Naive thymus-derived CD4-positive, alpha-beta T cell (primary cell): ENCODE measurements at regions of chr22 and their contacts with region 1.

Region 1: GRCh38 chr22:39598017-39598965 is 27.7 kb downstream of the CACNA1I start:
- DNase-seq: peak; percentile 33 to 74 (median 69)
- ATAC-seq: peak; percentile 91
- H3K4me3 ChIP-seq: no peak overlapping the region
- H3K4me3 Mint-ChIP-seq: peak overlapping the region; percentile 27 to 84 (median 52)
- H3K27ac ChIP-seq: no peak overlapping the region
- H3K27ac Mint-ChIP-seq: peak overlapping the region in 2 of 9 donors; percentile 7 to 32
- H3K4me1 ChIP-seq: peaks cover 3 to 25% of the 10 kb centered on the region in 2 donors
- H3K4me1 Mint-ChIP-seq: peaks cover 21 to 51% (median 44%) of the 10 kb centered on the region in 7 donors
- H3K27me3 ChIP-seq: no peaks in the 10 kb centered on the region
- H3K27me3 Mint-ChIP-seq: peaks cover 0 to 32% (median 0%) of the 10 kb centered on the region in 5 donors

Region 2: DNA sequence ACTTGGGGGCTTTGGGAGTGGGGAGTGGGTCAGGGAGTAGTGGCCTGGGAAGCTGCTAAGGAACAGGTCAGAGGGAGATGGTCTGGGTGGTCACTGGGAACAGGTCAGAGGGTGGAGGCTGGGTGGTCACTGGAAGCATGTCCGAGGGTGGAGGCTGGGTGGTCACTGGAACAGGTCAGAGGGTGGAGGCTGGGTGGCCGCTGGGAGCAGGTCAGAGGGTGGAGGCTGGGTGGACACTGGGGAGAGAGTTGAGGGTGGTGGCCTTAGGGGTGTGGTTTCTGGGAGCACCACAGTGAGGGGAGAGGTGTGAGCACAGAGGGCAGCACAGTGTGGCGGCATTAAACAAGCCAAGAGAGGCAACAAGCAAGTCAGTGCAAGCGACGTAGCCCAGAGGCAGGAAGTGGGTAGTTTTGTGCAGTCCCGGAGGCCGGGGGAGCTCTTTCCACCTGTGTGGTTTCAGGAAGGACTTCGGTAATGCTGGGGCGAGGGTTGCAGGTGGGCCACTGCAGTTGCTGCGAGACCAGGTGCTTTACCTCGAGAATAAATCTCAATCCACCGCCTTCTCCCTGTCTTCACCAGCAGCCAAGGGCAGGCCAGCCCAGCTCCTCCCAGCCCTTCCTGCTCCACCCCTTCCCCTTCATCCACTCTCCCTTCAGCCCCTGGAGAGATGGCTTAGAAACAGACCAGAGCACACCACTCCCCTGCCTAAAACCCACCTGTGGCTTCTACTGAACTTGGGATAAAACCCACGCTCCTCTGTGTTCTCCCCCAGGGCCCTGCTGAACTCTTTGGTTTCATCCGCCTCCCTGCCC is 30.9 kb before region 1 on chr22:
- CTCF ChIA-PET with region 1: no interaction called
- POLR2A ChIA-PET with region 1: interaction called, 3 read pairs
- intact Hi-C with region 1: loop called in 1 of 2 experiments (anchors 5 kb)
- DNase-seq: peak in 8 of 9 donors; percentile 35 to 67 (median 61)
- ATAC-seq: peak; percentile 87
- H3K4me3 ChIP-seq: peak overlapping the region; percentile 41
- H3K4me3 Mint-ChIP-seq: peak overlapping the region; percentile 32 to 76 (median 62)
- H3K27ac ChIP-seq: no peak overlapping the region
- H3K27ac Mint-ChIP-seq: peak overlapping the region; percentile 67 to 95 (median 77)
- H3K4me1 ChIP-seq: peaks cover 10 to 17% of the 10 kb centered on the region in 2 donors
- H3K4me1 Mint-ChIP-seq: peaks cover 12 to 26% (median 23%) of the 10 kb centered on the region in 7 donors
- H3K27me3 ChIP-seq: no peaks in the 10 kb centered on the region
- H3K27me3 Mint-ChIP-seq: peaks cover 0 to 4% (median 0%) of the 10 kb centered on the region in 5 donors

Region 3: DNA sequence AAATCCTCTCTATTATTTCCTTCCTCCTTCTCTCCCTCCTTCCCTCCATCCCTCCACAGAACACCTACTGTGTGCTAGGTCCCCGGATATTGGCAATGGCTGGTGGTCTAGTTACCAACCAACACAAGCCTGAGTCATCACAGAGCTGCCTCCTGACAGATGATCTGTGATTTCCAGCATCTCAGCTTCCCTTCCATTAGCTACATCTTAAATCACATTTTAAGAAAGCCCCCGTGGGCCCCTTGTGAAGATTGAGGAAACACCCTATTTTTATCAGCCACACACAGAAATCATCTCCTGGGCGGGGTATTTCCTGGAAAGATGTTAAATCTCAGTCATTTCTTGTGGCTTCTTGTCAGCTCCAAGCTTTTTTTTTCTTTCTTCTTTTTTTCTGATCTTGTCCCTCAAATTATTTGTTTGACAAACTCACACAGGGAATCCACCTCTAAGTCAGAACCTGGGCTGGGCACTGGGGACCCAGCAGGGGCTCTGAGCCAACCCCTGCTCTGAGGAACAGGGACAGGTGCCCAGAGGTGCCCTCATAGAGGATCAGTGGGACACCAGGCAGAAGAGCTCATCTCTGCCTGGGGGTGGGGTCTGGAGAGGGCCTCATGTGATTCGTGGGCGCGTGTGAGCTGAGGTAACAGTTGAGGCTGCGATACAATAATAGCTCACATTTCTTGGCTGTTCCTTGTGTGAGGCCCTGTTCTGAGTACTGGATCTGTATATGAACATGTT is 14.7 kb after region 1 on chr22:
- CTCF ChIA-PET with region 1: no interaction called
- POLR2A ChIA-PET with region 1: interaction called, 13 read pairs
- intact Hi-C with region 1: no loop called
- DNase-seq: peak in 7 of 9 donors; percentile 24 to 74 (median 39)
- ATAC-seq: peak; percentile 71
- H3K4me3 ChIP-seq: no peak overlapping the region
- H3K4me3 Mint-ChIP-seq: peak overlapping the region; percentile 42 to 88 (median 73)
- H3K27ac ChIP-seq: peak overlapping the region; percentile 41
- H3K27ac Mint-ChIP-seq: peak overlapping the region; percentile 64 to 95 (median 78)
- H3K4me1 ChIP-seq: peaks cover 0 to 32% of the 10 kb centered on the region in 2 donors
- H3K4me1 Mint-ChIP-seq: peaks cover 16 to 69% (median 48%) of the 10 kb centered on the region in 7 donors
- H3K27me3 ChIP-seq: no peaks in the 10 kb centered on the region
- H3K27me3 Mint-ChIP-seq: peaks cover 0 to 38% (median under 1%) of the 10 kb centered on the region in 5 donors

Region 4: GRCh38 chr22:39738746-39739145 is 140.5 kb after region 1 on chr22:
- CTCF ChIA-PET with region 1: no interaction called
- POLR2A ChIA-PET with region 1: no interaction called
- intact Hi-C with region 1: no loop called
- DNase-seq: no peak
- ATAC-seq: no peak
- H3K4me3 ChIP-seq: no peak overlapping the region
- H3K4me3 Mint-ChIP-seq: no peak overlapping the region
- H3K27ac ChIP-seq: no peak overlapping the region
- H3K27ac Mint-ChIP-seq: no peak overlapping the region
- H3K4me1 ChIP-seq: no peaks in the 10 kb centered on the region
- H3K4me1 Mint-ChIP-seq: peaks cover 0 to 7% (median 0%) of the 10 kb centered on the region in 7 donors
- H3K27me3 ChIP-seq: no peaks in the 10 kb centered on the region
- H3K27me3 Mint-ChIP-seq: peaks cover 0 to 36% (median 5%) of the 10 kb centered on the region in 5 donors